Endothelial cell of umbilical vein (primary cell): ENCODE measurements at regions of chr14 and their contacts with region 1.

Region 1: DNA sequence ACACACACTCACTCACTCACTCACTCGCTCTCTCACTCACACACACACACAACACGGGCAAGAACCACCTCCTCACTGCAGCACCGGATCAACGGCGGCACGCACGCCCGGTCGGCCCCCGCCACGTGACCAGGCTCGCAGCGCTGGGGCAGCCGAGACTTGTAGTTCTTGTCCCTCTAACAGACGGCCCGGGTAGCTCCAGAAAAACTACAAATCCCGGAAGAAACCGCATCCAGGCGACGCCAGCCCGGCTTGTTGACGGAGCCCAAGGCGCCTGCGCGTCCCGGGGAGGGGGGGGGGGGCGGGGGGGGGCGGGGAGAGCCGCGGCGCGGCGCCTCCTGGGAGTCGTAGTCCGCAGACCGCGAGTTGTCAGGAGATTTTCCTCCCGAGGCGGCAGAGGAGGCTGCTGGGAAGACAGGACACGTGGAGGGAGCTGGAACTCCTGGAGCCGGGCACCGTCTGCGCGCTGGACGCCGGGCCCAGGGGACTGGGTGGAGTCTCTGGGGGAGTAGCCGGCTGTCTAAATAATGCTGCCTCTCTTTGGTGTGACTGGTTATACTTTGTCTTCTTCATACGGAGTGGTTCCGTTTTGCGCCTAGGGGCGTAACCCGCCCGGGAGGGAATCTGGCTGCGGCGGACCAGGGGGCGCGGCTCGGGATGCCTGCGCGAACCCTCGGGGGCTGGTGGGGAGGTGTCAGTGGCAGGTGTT is at the start of gene MAX:
- DNase-seq: peak; percentile 99
- H3K4me3 ChIP-seq: peak within 1 kb of the TSS; percentile 87 to 93 (median 91)
- H3K27ac ChIP-seq: peak within 1 kb of the TSS; percentile 74
- H3K4me1 ChIP-seq: peaks cover 35% of the 10 kb centered on the region
- H3K27me3 ChIP-seq: no peaks in the 10 kb centered on the region
- CTCF ChIP-seq: no peak
- POLR2A ChIP-seq: peak; percentile 65
- total RNA-seq, gene MAX: 79.5 and 84.6 TPM in 2 replicates

Region 2: GRCh38 chr14:65074449-65075150 is 28.0 kb before region 1 on chr14:
- CTCF ChIA-PET with region 1: interaction called, 4 read pairs
- POLR2A ChIA-PET with region 1: no interaction called
- dilution Hi-C with region 1: no loop called
- intact Hi-C with region 1: loop called (anchors 2 kb)
- DNase-seq: peak; percentile 77
- H3K4me3 ChIP-seq: no peak overlapping the region
- H3K27ac ChIP-seq: peak overlapping the region; percentile 34
- H3K4me1 ChIP-seq: peaks cover 25% of the 10 kb centered on the region
- H3K27me3 ChIP-seq: no peaks in the 10 kb centered on the region
- CTCF ChIP-seq: no peak
- POLR2A ChIP-seq: no peak